Naive thymus-derived CD4-positive, alpha-beta T cell (primary cell): ENCODE measurements at regions of chr17 and their contacts with region 1.

Region 1: DNA sequence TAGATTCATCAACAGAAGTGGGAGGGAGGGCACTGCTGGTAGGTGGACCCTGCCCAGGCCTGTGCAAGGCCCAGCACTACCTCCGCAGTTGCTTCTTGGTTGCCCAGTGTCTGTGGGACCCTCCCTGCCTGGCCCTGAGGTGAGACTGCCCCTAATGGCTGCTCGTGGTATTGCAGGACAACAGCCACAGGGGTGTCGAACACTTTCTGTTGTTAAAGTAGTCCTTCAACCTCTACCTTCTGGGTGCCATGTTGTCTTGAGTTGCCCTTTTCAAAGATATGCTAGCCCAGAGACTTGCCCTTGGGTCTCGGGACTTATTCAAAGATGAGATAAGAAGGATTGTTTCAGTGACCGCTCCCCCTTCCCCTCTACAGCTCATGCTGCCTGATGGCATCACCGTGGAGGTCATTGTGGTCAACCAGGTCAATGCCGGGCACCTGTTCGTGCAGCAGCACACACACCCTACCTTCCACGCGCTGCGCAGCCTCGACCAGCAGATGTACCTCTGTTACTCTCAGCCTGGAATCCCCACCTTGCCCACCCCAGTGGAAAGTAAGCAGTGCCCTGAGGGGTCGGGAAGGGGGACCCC is 29.1 kb downstream of the AKAP1 start:
- DNase-seq: peak; percentile 24 to 72 (median 52)
- ATAC-seq: peak; percentile 81
- H3K4me3 ChIP-seq: no peak overlapping the region
- H3K4me3 Mint-ChIP-seq: no peak overlapping the region
- H3K27ac ChIP-seq: no peak overlapping the region
- H3K27ac Mint-ChIP-seq: no peak overlapping the region
- H3K4me1 ChIP-seq: no peaks in the 10 kb centered on the region
- H3K4me1 Mint-ChIP-seq: peaks cover 0 to 4% (median 0%) of the 10 kb centered on the region in 7 donors
- H3K27me3 ChIP-seq: no peaks in the 10 kb centered on the region
- H3K27me3 Mint-ChIP-seq: no peaks in the 10 kb centered on the region

Region 2: GRCh38 chr17:56960596-56961538 is 153.3 kb before region 1 on chr17 and contains the start of gene COIL:
- CTCF ChIA-PET with region 1: no interaction called
- POLR2A ChIA-PET with region 1: no interaction called
- intact Hi-C with region 1: loop called in 1 of 2 experiments (anchors 1 kb)
- DNase-seq: peak; percentile 90 to 96 (median 92)
- ATAC-seq: peak; percentile 100
- H3K4me3 ChIP-seq: peak within 1 kb of the TSS; percentile 80
- H3K4me3 Mint-ChIP-seq: peak within 1 kb of the TSS; percentile 80 to 93 (median 86)
- H3K27ac ChIP-seq: peak within 1 kb of the TSS; percentile 97
- H3K27ac Mint-ChIP-seq: peak within 1 kb of the TSS; percentile 78 to 95 (median 91)
- H3K4me1 ChIP-seq: peaks cover 6 to 11% of the 10 kb centered on the region in 2 donors
- H3K4me1 Mint-ChIP-seq: peaks cover 14 to 34% (median 28%) of the 10 kb centered on the region in 7 donors
- H3K27me3 ChIP-seq: no peaks in the 10 kb centered on the region
- H3K27me3 Mint-ChIP-seq: peaks cover 0 to 3% (median 0%) of the 10 kb centered on the region in 5 donors
- total RNA-seq, gene COIL: 13.1 to 22.7 (median 19.0) TPM

Region 3: GRCh38 chr17:57009737-57010445 is 104.3 kb before region 1 on chr17:
- CTCF ChIA-PET with region 1: no interaction called
- POLR2A ChIA-PET with region 1: no interaction called
- intact Hi-C with region 1: loop called in 1 of 2 experiments (anchors 1 kb)
- DNase-seq: peak; percentile 10 to 54 (median 41)
- ATAC-seq: peak; percentile 91
- H3K4me3 ChIP-seq: no peak overlapping the region
- H3K4me3 Mint-ChIP-seq: peak overlapping the region in 9 of 10 donors; percentile 13 to 84 (median 66)
- H3K27ac ChIP-seq: no peak overlapping the region
- H3K27ac Mint-ChIP-seq: peak overlapping the region in 3 of 9 donors; percentile 1 to 57 (median 10)
- H3K4me1 ChIP-seq: no peaks in the 10 kb centered on the region
- H3K4me1 Mint-ChIP-seq: peaks cover 6 to 15% (median 10%) of the 10 kb centered on the region in 7 donors
- H3K27me3 ChIP-seq: no peaks in the 10 kb centered on the region
- H3K27me3 Mint-ChIP-seq: peaks cover 0 to 17% (median 0%) of the 10 kb centered on the region in 5 donors

Region 4: GRCh38 chr17:57045868-57046704 is 68.1 kb before region 1 on chr17:
- CTCF ChIA-PET with region 1: no interaction called
- POLR2A ChIA-PET with region 1: no interaction called
- intact Hi-C with region 1: loop called in 1 of 2 experiments (anchors 5 kb)
- DNase-seq: peak in 7 of 9 donors; percentile 5 to 73 (median 10)
- ATAC-seq: peak; percentile 78
- H3K4me3 ChIP-seq: no peak overlapping the region
- H3K4me3 Mint-ChIP-seq: peak overlapping the region; percentile 68 to 89 (median 82)
- H3K27ac ChIP-seq: no peak overlapping the region
- H3K27ac Mint-ChIP-seq: no peak overlapping the region
- H3K4me1 ChIP-seq: peaks cover 4 to 9% of the 10 kb centered on the region in 2 donors
- H3K4me1 Mint-ChIP-seq: peaks cover 11 to 20% (median 17%) of the 10 kb centered on the region in 7 donors
- H3K27me3 ChIP-seq: peaks cover 0 to 7% of the 10 kb centered on the region in 2 donors
- H3K27me3 Mint-ChIP-seq: peaks cover 44 to 74% (median 61%) of the 10 kb centered on the region in 5 donors